CD14-positive monocyte (primary cell): ENCODE measurements at regions of chr12 and their contacts with region 1.

Region 1: DNA sequence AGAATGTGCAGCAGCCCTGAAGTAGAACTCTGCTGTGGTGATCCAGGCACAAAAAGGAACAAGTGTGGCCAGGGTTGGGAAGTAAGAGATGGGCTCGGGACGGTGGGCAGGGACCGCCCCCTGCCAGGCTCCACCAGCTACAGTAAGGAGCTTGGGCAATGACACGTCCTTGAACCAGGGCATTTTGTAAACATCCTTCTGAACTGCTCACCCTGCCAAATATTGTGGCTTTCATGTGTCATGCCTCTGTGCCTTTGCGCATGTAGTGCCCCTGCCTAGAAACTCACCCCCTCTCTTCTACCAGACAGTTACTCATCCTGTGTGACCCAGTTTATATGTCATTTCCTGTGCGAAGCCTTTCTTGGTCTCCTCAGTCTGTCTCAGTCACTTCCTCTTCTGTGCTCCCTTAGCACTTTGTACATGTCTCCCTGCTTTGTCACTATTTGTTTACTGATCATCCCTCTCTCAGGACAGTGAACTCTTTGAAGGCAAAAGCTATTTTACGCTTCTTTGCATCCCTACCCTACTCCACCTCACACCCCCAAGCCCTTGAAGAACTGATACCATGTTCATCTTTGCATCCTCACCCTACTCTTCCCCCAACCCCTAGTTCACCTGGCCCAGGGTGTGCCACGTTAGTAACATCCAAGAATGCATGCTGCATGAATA is 108.9 kb upstream of the PLEKHG7 start:
- DNase-seq: peak; percentile 96 to 99 (median 97)
- H3K4me3 ChIP-seq: no peak overlapping the region
- H3K4me3 Mint-ChIP-seq: peak overlapping the region; percentile 26 to 66
- H3K27ac ChIP-seq: peak overlapping the region; percentile 44 to 80
- H3K27ac Mint-ChIP-seq: peak overlapping the region; percentile 78 to 96 (median 94)
- H3K4me1 ChIP-seq: peaks cover 11 to 12% of the 10 kb centered on the region in 2 donors
- H3K4me1 Mint-ChIP-seq: peaks cover 29% of the 10 kb centered on the region
- H3K27me3 ChIP-seq: no peaks in the 10 kb centered on the region
- H3K27me3 Mint-ChIP-seq: peaks cover 0 to 8% (median 2%) of the 10 kb centered on the region in 3 donors
- CTCF ChIP-seq: no peak

Region 2: GRCh38 chr12:92445253-92446082 is 148.4 kb before region 1 on chr12:
- intact Hi-C with region 1: loop called in 1 of 2 experiments (anchors 5 kb)
- DNase-seq: peak; percentile 46 to 54 (median 49)
- H3K4me3 ChIP-seq: peak overlapping the region in 2 of 3 experiments; percentile 5 to 13
- H3K4me3 Mint-ChIP-seq: peak overlapping the region in 1 of 2 donors; percentile 60
- H3K27ac ChIP-seq: peak overlapping the region; percentile 45 to 82
- H3K27ac Mint-ChIP-seq: peak overlapping the region; percentile 91 to 98 (median 94)
- H3K4me1 ChIP-seq: peaks cover 19 to 23% of the 10 kb centered on the region in 2 donors
- H3K4me1 Mint-ChIP-seq: peaks cover 31% of the 10 kb centered on the region
- H3K27me3 ChIP-seq: no peaks in the 10 kb centered on the region
- H3K27me3 Mint-ChIP-seq: peaks cover 2 to 6% (median 3%) of the 10 kb centered on the region in 3 donors
- CTCF ChIP-seq: no peak